OCI-LY7 (cell line): ENCODE measurements at regions of chr6 and their contacts with region 1.

Region 1: DNA sequence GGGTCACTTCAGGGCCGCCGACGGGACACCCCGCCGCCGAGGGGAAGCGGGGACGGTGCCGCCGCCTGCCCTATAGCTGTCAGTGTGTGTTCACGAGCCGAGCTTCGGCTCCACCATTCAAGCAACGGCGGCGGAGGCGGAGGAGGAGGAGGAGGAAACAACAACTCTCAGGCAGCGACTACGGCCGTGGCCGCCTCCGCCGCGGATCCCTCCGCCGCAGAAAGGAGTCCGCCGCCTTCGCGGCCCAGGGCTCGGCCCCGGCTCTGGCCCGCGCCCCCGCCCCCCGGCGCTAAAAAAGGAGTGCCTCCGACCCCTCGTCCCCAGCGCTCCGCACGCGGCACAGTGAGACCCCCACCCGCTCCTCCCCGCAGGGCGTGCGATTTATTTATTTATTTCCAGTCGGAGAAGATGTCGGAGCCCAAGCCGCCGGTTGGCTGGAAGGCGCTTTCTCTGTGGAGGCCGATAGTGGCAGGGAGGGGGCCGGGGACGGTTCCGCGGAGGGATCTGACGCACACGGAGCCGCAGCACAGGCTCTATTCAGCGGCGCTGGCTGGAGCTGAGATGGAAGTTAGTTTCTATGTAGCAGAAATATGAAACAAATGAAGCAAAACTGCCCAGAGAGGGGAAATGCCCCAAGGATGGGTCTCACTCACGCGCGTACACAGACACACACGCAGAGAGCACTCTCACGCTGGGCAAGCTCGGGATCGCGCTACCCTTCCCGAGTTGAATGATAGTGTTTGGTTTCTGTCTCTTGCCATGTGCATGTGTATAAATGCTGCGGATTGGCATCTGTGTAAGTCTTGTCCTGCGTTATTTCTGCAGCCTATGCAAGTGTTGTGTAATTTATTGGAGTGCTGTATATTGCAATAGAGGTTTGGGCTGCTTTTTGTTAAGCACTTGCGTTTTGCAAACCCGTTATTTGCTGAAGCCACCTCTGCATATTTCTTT is at the start of gene PHIP:
- DNase-seq: peak; percentile 95
- H3K4me3 ChIP-seq: peak within 1 kb of the TSS; percentile 96
- H3K27ac ChIP-seq: peak within 1 kb of the TSS; percentile 93
- H3K4me1 ChIP-seq: peaks cover 34% of the 10 kb centered on the region
- CTCF ChIP-seq: no peak
- total RNA-seq, gene PHIP: 32.1 and 35.4 TPM in 2 replicates

Region 2: DNA sequence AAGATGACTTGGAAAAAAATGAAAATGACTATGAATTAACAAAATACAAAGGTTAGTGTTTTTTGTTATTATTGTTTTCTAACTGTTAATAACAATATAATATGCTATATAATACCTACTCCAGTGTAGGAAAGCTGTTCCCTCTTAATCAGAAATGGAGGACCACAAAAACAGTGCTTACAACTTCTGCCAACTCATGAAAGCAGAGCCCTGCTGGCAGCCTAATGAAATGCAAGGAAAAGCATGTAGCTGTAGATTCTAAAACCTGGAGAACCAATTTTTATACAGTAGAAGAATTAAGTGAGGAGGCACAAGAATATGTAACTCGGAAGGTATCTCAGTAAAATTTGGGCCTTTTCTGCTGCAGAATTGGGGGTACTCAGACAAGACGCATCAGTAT is 29.7 kb before region 1 on chr6:
- CTCF ChIA-PET with region 1: no interaction called
- POLR2A ChIA-PET with region 1: interaction called, 4 read pairs
- intact Hi-C with region 1: loop called (anchors 2 kb)
- DNase-seq: peak; percentile 17
- H3K4me3 ChIP-seq: no peak overlapping the region
- H3K27ac ChIP-seq: no peak overlapping the region
- H3K4me1 ChIP-seq: no peaks in the 10 kb centered on the region
- CTCF ChIP-seq: peak; percentile 63

Region 3: GRCh38 chr6:79233611-79234149 is 155.3 kb after region 1 on chr6:
- CTCF ChIA-PET with region 1: no interaction called
- POLR2A ChIA-PET with region 1: interaction called, 4 read pairs
- intact Hi-C with region 1: loop called (anchors 1 kb)
- DNase-seq: peak; percentile 71
- H3K4me3 ChIP-seq: peak overlapping the region; percentile 77
- H3K27ac ChIP-seq: peak overlapping the region; percentile 48
- H3K4me1 ChIP-seq: peaks cover 32% of the 10 kb centered on the region
- CTCF ChIP-seq: 0 out of 2 replicates have a peak, but pooled peaks have one; percentile 22

Region 4: GRCh38 chr6:79330704-79331103 is 252.4 kb after region 1 on chr6:
- CTCF ChIA-PET with region 1: no interaction called
- POLR2A ChIA-PET with region 1: no interaction called
- intact Hi-C with region 1: no loop called
- DNase-seq: no peak
- H3K4me3 ChIP-seq: no peak overlapping the region
- H3K27ac ChIP-seq: no peak overlapping the region
- H3K4me1 ChIP-seq: no peaks in the 10 kb centered on the region
- CTCF ChIP-seq: no peak

Region 5: DNA sequence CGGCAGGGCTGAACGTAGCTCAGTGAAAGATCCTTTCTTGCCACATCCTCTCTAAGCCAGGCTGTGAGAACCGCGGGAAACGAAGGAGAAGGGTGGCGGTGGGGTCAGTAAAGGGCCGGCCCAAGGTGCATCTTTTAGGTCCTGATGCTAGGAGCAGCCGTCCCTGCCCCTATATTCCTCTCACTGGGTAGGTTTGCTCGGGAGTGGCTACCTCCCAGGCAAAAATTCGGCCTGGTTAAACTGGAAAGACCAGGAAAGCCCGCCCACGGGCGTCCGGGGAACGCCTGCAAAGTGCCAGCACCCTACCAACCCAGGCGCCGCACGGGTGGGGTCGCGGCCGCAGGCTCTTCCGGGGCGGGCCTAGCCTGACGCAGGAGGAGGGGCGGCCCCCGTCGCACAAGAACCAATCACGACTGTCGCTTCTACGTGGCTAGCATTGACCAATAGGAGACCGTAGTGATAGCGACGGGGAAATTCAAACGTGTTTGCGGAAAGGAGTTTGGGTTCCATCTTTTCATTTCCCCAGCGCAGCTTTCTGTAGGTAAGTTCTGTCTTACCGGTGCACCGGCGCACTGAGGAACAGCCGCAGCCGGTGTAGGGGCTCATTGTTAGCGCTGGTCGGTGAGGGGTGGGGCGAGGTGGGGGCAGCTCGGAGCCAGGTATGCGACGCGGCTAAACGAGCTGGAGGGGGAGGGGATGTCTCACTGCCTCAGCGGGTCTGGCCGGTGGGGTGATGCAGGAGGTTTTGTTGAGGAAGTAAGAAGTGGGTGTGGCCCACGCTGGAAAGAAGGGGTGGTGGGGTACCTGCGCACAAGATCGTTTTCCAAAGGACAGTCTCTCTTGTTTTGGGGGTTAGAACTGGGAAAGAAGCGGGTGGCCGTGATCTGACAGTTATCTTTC is 926.1 kb after region 1 on chr6 and contains the start of gene TTK:
- CTCF ChIA-PET with region 1: no interaction called
- POLR2A ChIA-PET with region 1: interaction called, 5 read pairs
- intact Hi-C with region 1: loop called (anchors 5 kb)
- DNase-seq: peak; percentile 97
- H3K4me3 ChIP-seq: peak within 1 kb of the TSS; percentile 93
- H3K27ac ChIP-seq: peak within 1 kb of the TSS; percentile 78
- H3K4me1 ChIP-seq: peaks cover 29% of the 10 kb centered on the region
- CTCF ChIP-seq: no peak
- total RNA-seq, gene TTK: 43.2 and 49.5 TPM in 2 replicates